IMR-90 (cell line): ENCODE measurements at regions of chr18 and their contacts with region 1.

Region 1: DNA sequence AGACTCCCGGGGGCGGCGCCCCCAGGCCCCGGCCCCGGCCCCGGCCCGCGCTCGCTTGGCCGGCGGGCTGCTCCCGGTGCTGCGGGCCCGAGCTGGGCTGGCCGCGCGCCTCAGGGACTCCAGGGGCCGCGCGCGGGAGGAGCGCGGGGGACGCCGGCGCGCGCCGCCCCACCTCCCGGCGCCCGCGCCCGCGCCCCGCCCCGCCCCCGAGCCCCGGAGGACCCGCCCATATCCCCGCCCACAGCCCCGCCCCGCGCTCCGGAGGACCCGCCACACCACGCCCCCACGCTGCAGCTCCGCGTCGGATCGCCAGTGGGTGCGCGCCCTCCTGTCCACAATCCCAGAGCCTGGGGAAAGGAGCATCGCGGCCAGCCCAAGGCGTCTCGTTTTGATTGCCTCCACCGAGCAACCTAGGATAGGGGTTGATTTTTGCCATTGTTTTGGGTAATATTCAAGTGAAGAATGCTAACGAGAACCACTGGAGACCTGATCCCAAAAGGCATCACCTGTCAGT is at the start of gene PARD6G:
- DNase-seq: peak; percentile 60
- ATAC-seq: peak; percentile 90
- H3K4me3 ChIP-seq: peak within 1 kb of the TSS; percentile 99
- H3K27ac ChIP-seq: peak within 1 kb of the TSS; percentile 40; the same call in 1 of the 2 replicates
- H3K4me1 ChIP-seq: peaks cover 3% of the 10 kb centered on the region
- H3K27me3 ChIP-seq: no peaks in the 10 kb centered on the region
- CTCF ChIP-seq: peak; percentile 21; the same call in 1 of the 2 replicates
- POLR2A ChIP-seq: no peak
- RAD21 ChIP-seq: no peak
- total RNA-seq, gene PARD6G: 2.5 and 3.3 TPM in 2 replicates

Region 2: DNA sequence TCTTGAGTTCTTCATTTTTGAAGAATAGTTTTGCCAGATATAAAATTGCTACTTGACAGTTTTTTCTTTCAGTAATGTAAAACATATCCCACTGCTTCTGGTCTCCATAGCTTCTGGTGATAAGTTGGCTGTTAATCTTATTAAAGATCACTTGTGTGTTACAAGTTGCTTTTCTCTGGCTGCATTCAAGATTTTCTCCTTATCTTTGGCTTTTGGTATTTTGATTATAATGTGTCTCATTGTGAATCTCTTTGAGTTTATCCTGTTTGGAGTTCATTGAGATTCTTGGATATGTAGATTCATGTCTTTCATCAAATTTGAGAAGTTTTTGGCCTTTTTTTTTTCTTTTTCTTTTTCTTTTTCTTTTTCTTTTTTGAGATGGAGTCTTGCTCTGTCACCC is 158.6 kb before region 1 on chr18:
- CTCF ChIA-PET with region 1: no interaction called
- POLR2A ChIA-PET with region 1: no interaction called
- dilution Hi-C with region 1: no loop called
- in situ Hi-C with region 1: no loop called
- intact Hi-C with region 1: no loop called
- DNase-seq: no peak
- ATAC-seq: no peak
- H3K4me3 ChIP-seq: no peak overlapping the region
- H3K27ac ChIP-seq: no peak overlapping the region
- H3K4me1 ChIP-seq: no peaks in the 10 kb centered on the region
- H3K27me3 ChIP-seq: no peaks in the 10 kb centered on the region; the same call in 1 of the 2 replicates
- CTCF ChIP-seq: no peak
- POLR2A ChIP-seq: no peak
- RAD21 ChIP-seq: no peak

Region 3: GRCh38 chr18:80108728-80109675 is 138.5 kb before region 1 on chr18 and contains the start of gene ADNP2:
- CTCF ChIA-PET with region 1: no interaction called
- POLR2A ChIA-PET with region 1: no interaction called
- dilution Hi-C with region 1: no loop called
- in situ Hi-C with region 1: no loop called
- intact Hi-C with region 1: loop called (anchors 1 kb)
- DNase-seq: peak; percentile 96
- ATAC-seq: peak; percentile 82
- H3K4me3 ChIP-seq: peak within 1 kb of the TSS; percentile 100
- H3K27ac ChIP-seq: peak within 1 kb of the TSS; percentile 54; the same call in 1 of the 2 replicates
- H3K4me1 ChIP-seq: peaks cover 7% of the 10 kb centered on the region
- H3K27me3 ChIP-seq: no peaks in the 10 kb centered on the region
- CTCF ChIP-seq: no peak
- POLR2A ChIP-seq: peak; percentile 61
- RAD21 ChIP-seq: no peak
- total RNA-seq, gene ADNP2: 13.9 and 18.3 TPM in 2 replicates

Region 4: GRCh38 chr18:80200171-80200931 is 47.1 kb before region 1 on chr18:
- CTCF ChIA-PET with region 1: no interaction called
- POLR2A ChIA-PET with region 1: no interaction called
- dilution Hi-C with region 1: no loop called
- in situ Hi-C with region 1: no loop called
- intact Hi-C with region 1: no loop called
- DNase-seq: peak; percentile 17
- ATAC-seq: peak; percentile 47
- H3K4me3 ChIP-seq: no peak overlapping the region
- H3K27ac ChIP-seq: no peak overlapping the region
- H3K4me1 ChIP-seq: peaks cover 8% of the 10 kb centered on the region
- H3K27me3 ChIP-seq: no peaks in the 10 kb centered on the region
- CTCF ChIP-seq: peak; percentile 13; the same call in 1 of the 2 replicates
- POLR2A ChIP-seq: no peak
- RAD21 ChIP-seq: no peak